SK-N-SH (cell line): ENCODE measurements at regions of chr20 and their contacts with region 1.

Region 1: GRCh38 chr20:52127309-52127708 is 64.3 kb downstream of the ZFP64 start:
- DNase-seq: no peak
- H3K4me3 ChIP-seq: no peak overlapping the region
- H3K27ac ChIP-seq: no peak overlapping the region
- H3K4me1 ChIP-seq: no peaks in the 10 kb centered on the region
- H3K27me3 ChIP-seq: no peaks in the 10 kb centered on the region
- CTCF ChIP-seq: no peak
- EP300 ChIP-seq: no peak
- RAD21 ChIP-seq: no peak

Region 2: GRCh38 chr20:51712501-51713197 is 414.7 kb before region 1 on chr20:
- CTCF ChIA-PET with region 1: no interaction called
- POLR2A ChIA-PET with region 1: no interaction called
- DNase-seq: peak; percentile 35
- H3K4me3 ChIP-seq: no peak overlapping the region
- H3K27ac ChIP-seq: no peak overlapping the region
- H3K4me1 ChIP-seq: peaks cover 4 to 9% of the 10 kb centered on the region in 2 experiments; a peak in 3 of 4 replicates
- H3K27me3 ChIP-seq: no peaks in the 10 kb centered on the region
- CTCF ChIP-seq: peak; percentile 57
- EP300 ChIP-seq: no peak
- RAD21 ChIP-seq: peak; percentile 42

Region 3: DNA sequence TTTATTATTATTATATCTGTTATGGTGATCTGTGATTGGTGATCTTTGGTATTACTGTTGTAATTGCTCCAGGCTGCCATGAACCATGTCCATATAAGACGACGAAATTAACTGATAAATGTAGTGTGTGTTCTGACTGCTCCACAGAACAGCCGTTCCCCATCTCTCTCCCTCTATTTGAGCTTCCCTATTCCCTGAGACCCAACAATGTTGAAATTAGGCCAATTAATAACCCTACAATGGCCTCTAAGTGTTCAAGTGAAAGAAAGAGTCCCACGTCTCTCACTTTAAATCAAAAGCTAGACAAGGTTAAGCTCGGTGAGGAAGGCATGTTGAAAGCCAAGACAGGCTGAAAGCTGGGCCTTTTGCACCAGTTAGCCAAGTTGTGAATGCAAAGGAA is 12.7 kb after region 1 on chr20:
- CTCF ChIA-PET with region 1: interaction called, 11 read pairs
- POLR2A ChIA-PET with region 1: no interaction called
- DNase-seq: no peak
- H3K4me3 ChIP-seq: no peak overlapping the region
- H3K27ac ChIP-seq: no peak overlapping the region
- H3K4me1 ChIP-seq: no peaks in the 10 kb centered on the region
- H3K27me3 ChIP-seq: no peaks in the 10 kb centered on the region
- CTCF ChIP-seq: no peak
- EP300 ChIP-seq: no peak
- RAD21 ChIP-seq: no peak

Region 4: DNA sequence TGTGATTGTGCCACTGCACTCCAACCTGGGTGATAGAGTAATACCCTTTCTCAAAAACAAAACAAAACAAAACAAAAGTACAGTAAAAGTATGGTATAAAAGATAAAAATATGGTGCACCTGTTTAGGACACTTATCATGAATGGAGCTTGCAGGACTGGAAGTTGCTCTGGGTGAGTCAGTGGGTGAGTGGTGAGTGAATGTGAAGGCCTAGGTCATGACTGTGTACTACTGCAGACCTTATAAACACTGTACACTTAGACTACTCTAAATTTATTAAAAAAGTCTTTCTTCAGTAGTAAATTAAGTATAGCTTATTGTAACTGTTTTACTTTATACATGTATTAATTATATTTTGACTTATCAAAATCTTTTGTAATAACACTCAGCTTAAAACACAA is 18.3 kb after region 1 on chr20:
- CTCF ChIA-PET with region 1: interaction called, 23 read pairs
- POLR2A ChIA-PET with region 1: no interaction called
- DNase-seq: no peak
- H3K4me3 ChIP-seq: no peak overlapping the region
- H3K27ac ChIP-seq: no peak overlapping the region
- H3K4me1 ChIP-seq: no peaks in the 10 kb centered on the region
- H3K27me3 ChIP-seq: no peaks in the 10 kb centered on the region
- CTCF ChIP-seq: no peak
- EP300 ChIP-seq: no peak
- RAD21 ChIP-seq: no peak

Region 5: GRCh38 chr20:52150440-52151258 is 23.3 kb after region 1 on chr20:
- CTCF ChIA-PET with region 1: interaction called, 23 read pairs
- POLR2A ChIA-PET with region 1: no interaction called
- DNase-seq: peak; percentile 65
- H3K4me3 ChIP-seq: no peak overlapping the region
- H3K27ac ChIP-seq: no peak overlapping the region
- H3K4me1 ChIP-seq: no peaks in the 10 kb centered on the region
- H3K27me3 ChIP-seq: no peaks in the 10 kb centered on the region
- CTCF ChIP-seq: peak; percentile 85
- EP300 ChIP-seq: no peak
- RAD21 ChIP-seq: peak; percentile 75

Region 6: GRCh38 chr20:52160621-52161204 is 33.4 kb after region 1 on chr20:
- CTCF ChIA-PET with region 1: interaction called, 15 read pairs
- POLR2A ChIA-PET with region 1: no interaction called
- DNase-seq: no peak
- H3K4me3 ChIP-seq: no peak overlapping the region
- H3K27ac ChIP-seq: no peak overlapping the region
- H3K4me1 ChIP-seq: no peaks in the 10 kb centered on the region
- H3K27me3 ChIP-seq: no peaks in the 10 kb centered on the region
- CTCF ChIP-seq: no peak
- EP300 ChIP-seq: no peak
- RAD21 ChIP-seq: no peak

Region 7: GRCh38 chr20:52279706-52280105 is 152.4 kb after region 1 on chr20:
- CTCF ChIA-PET with region 1: no interaction called
- POLR2A ChIA-PET with region 1: no interaction called
- DNase-seq: no peak
- H3K4me3 ChIP-seq: no peak overlapping the region
- H3K27ac ChIP-seq: no peak overlapping the region
- H3K4me1 ChIP-seq: peaks cover 0 to 6% of the 10 kb centered on the region in 2 experiments; a peak in 3 of 4 replicates
- H3K27me3 ChIP-seq: no peaks in the 10 kb centered on the region
- CTCF ChIP-seq: no peak
- EP300 ChIP-seq: no peak
- RAD21 ChIP-seq: no peak